H1 (cell line): ENCODE measurements at regions of chr22 and their contacts with region 1.

Region 1: GRCh38 chr22:41381329-41382097 is at the start of gene TEF:
- DNase-seq: peak; percentile 97 to 98
- H3K4me3 ChIP-seq: peak within 1 kb of the TSS; percentile 66 to 79 (median 69)
- H3K27ac ChIP-seq: peak within 1 kb of the TSS; percentile 96
- H3K4me1 ChIP-seq: peaks cover 2 to 10% (median 5%) of the 10 kb centered on the region in 4 experiments
- H3K27me3 ChIP-seq: no peaks in the 10 kb centered on the region; a peak in 1 of 7 replicates
- CTCF ChIP-seq: no peak
- EP300 ChIP-seq: no peak
- POLR2A ChIP-seq: peak; percentile 24 to 54
- RAD21 ChIP-seq: no peak
- total RNA-seq, gene TEF: 7.4 and 8.9 TPM in 2 replicates

Region 2: GRCh38 chr22:41204992-41205900 is 176.3 kb before region 1 on chr22 and contains the start of gene L3MBTL2:
- CTCF ChIA-PET with region 1: no interaction called
- POLR2A ChIA-PET with region 1: no interaction called
- DNase-seq: peak; percentile 85 to 99
- H3K4me3 ChIP-seq: peak within 1 kb of the TSS; percentile 87 to 97 (median 95)
- H3K27ac ChIP-seq: peak within 1 kb of the TSS; percentile 88
- H3K4me1 ChIP-seq: peaks cover 0 to 4% (median 0%) of the 10 kb centered on the region in 4 experiments; a peak in 2 of 7 replicates
- H3K27me3 ChIP-seq: no peaks in the 10 kb centered on the region; a peak in 1 of 7 replicates
- CTCF ChIP-seq: no peak
- EP300 ChIP-seq: no peak
- POLR2A ChIP-seq: peak; percentile 76 to 89
- RAD21 ChIP-seq: no peak
- total RNA-seq, gene L3MBTL2: 23.9 and 24.4 TPM in 2 replicates

Region 3: DNA sequence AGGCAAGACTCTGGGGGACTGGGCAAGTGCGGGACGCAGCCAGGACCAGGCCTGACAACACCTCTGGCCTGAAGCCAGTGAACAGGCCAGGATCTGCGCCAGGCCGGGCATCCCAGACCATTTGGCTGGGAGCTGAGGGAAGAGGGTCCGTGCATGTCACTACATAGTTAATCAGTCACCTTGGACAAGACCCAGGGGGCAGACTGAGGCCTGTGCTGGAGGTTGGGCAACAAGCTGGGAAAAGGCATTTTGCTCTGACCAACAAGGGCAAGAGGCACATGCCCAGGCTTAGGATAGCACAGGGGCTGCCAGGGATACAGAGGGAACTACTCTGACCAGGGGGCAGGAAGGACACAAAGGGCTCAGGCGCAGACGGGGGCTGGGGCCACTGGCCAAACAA is 133.8 kb before region 1 on chr22:
- CTCF ChIA-PET with region 1: no interaction called
- POLR2A ChIA-PET with region 1: no interaction called
- DNase-seq: no peak
- H3K4me3 ChIP-seq: no peak overlapping the region
- H3K27ac ChIP-seq: no peak overlapping the region
- H3K4me1 ChIP-seq: peaks cover 0 to 1% (median 0%) of the 10 kb centered on the region in 4 experiments; a peak in 3 of 7 replicates
- H3K27me3 ChIP-seq: no peaks in the 10 kb centered on the region
- CTCF ChIP-seq: no peak
- EP300 ChIP-seq: no peak
- POLR2A ChIP-seq: no peak
- RAD21 ChIP-seq: no peak

Region 4: GRCh38 chr22:41285820-41286638 is 95.5 kb before region 1 on chr22 and contains the start of gene RANGAP1:
- CTCF ChIA-PET with region 1: no interaction called
- POLR2A ChIA-PET with region 1: interaction called, 24 read pairs
- DNase-seq: peak; percentile 95
- H3K4me3 ChIP-seq: peak within 1 kb of the TSS; percentile 76 to 93 (median 82)
- H3K27ac ChIP-seq: peak within 1 kb of the TSS; percentile 67
- H3K4me1 ChIP-seq: peaks cover 2 to 20% (median 10%) of the 10 kb centered on the region in 4 experiments; a peak in 6 of 7 replicates
- H3K27me3 ChIP-seq: no peaks in the 10 kb centered on the region
- CTCF ChIP-seq: peak in 1 of 3 experiments; percentile 22; a peak in 1 of 4 replicates
- EP300 ChIP-seq: no peak
- POLR2A ChIP-seq: peak; percentile 83 to 94
- RAD21 ChIP-seq: no peak
- total RNA-seq, gene RANGAP1: 171 and 176 TPM in 2 replicates

Region 5: DNA sequence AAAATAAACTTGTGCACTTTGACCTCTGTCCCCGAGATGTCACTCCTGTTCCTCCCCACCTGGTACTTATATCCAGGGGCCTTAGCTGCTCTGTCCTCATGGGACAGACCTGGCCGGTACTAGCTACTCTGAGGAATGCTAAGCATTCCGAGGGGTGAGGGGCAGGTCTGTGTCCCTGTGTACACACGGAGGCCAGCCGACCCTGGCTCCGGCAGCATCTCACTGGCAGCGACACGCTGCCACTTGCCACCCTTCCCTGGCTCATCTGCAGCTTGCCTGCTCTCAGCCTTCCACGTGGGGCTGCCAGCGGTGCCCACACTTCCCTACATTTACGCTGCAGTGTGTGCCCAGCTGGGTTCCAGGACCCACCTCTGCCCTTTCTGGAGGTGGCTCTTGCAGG is 21.4 kb before region 1 on chr22:
- CTCF ChIA-PET with region 1: interaction called, 4 read pairs
- POLR2A ChIA-PET with region 1: interaction called, 129 read pairs
- DNase-seq: peak in 1 of 2 experiments; percentile 10
- H3K4me3 ChIP-seq: peak overlapping the region in 2 of 4 experiments; percentile 12 to 21; a peak in 2 of 8 replicates
- H3K27ac ChIP-seq: peak overlapping the region; percentile 37; the same call in 1 of the 2 replicates
- H3K4me1 ChIP-seq: peaks cover 6 to 24% (median 12%) of the 10 kb centered on the region in 4 experiments
- H3K27me3 ChIP-seq: no peaks in the 10 kb centered on the region
- CTCF ChIP-seq: no peak
- EP300 ChIP-seq: peak in 1 of 2 experiments; percentile 85; a peak in 2 of 3 replicates
- POLR2A ChIP-seq: peak in 1 of 2 experiments; percentile 52; a peak in 1 of 3 replicates
- RAD21 ChIP-seq: peak; percentile 3 to 16; a peak in 2 of 4 replicates

Region 6: GRCh38 chr22:41397143-41397811 is 15.8 kb after region 1 on chr22:
- CTCF ChIA-PET with region 1: interaction called, 10 read pairs
- POLR2A ChIA-PET with region 1: interaction called, 15 read pairs
- DNase-seq: no peak
- H3K4me3 ChIP-seq: no peak overlapping the region
- H3K27ac ChIP-seq: no peak overlapping the region
- H3K4me1 ChIP-seq: peaks cover 0 to 3% (median 0%) of the 10 kb centered on the region in 4 experiments; a peak in 1 of 7 replicates
- H3K27me3 ChIP-seq: no peaks in the 10 kb centered on the region
- CTCF ChIP-seq: no peak
- EP300 ChIP-seq: no peak
- POLR2A ChIP-seq: no peak
- RAD21 ChIP-seq: no peak

Region 7: GRCh38 chr22:41468381-41469217 is 87.1 kb after region 1 on chr22 and contains the starts of genes ACO2 and PHF5A:
- CTCF ChIA-PET with region 1: no interaction called
- POLR2A ChIA-PET with region 1: interaction called, 12 read pairs
- DNase-seq: peak; percentile 85 to 99
- H3K4me3 ChIP-seq: peak within 1 kb of the TSS; percentile 74 to 93 (median 80)
- H3K27ac ChIP-seq: peak within 1 kb of the TSS; percentile 98
- H3K4me1 ChIP-seq: peaks cover 0 to 9% (median 7%) of the 10 kb centered on the region in 4 experiments; a peak in 4 of 7 replicates
- H3K27me3 ChIP-seq: no peaks in the 10 kb centered on the region
- CTCF ChIP-seq: no peak
- EP300 ChIP-seq: no peak
- POLR2A ChIP-seq: peak; percentile 69 to 91
- RAD21 ChIP-seq: no peak; a peak in 1 of 4 replicates
- total RNA-seq, gene ACO2: 72.4 and 75.4 TPM in 2 replicates
- total RNA-seq, gene PHF5A: 109 and 135 TPM in 2 replicates

Region 8: GRCh38 chr22:41621099-41621910 is 239.8 kb after region 1 on chr22 and contains the start of gene XRCC6:
- CTCF ChIA-PET with region 1: no interaction called
- POLR2A ChIA-PET with region 1: interaction called, 11 read pairs
- DNase-seq: peak; percentile 100
- H3K4me3 ChIP-seq: peak within 1 kb of the TSS; percentile 78 to 98 (median 96)
- H3K27ac ChIP-seq: peak within 1 kb of the TSS; percentile 98
- H3K4me1 ChIP-seq: peaks cover 0 to 11% (median 4%) of the 10 kb centered on the region in 4 experiments; a peak in 5 of 7 replicates
- H3K27me3 ChIP-seq: no peaks in the 10 kb centered on the region
- CTCF ChIP-seq: no peak
- EP300 ChIP-seq: 0 out of 3 replicates have a peak, but pooled peaks of 1 of the 2 experiments have one; percentile 7
- POLR2A ChIP-seq: peak; percentile 91 to 95
- RAD21 ChIP-seq: no peak
- total RNA-seq, gene XRCC6: 488 and 490 TPM in 2 replicates